IMR-90 (cell line): ENCODE measurements at regions of chr5 and their contacts with region 1.

Region 1: DNA sequence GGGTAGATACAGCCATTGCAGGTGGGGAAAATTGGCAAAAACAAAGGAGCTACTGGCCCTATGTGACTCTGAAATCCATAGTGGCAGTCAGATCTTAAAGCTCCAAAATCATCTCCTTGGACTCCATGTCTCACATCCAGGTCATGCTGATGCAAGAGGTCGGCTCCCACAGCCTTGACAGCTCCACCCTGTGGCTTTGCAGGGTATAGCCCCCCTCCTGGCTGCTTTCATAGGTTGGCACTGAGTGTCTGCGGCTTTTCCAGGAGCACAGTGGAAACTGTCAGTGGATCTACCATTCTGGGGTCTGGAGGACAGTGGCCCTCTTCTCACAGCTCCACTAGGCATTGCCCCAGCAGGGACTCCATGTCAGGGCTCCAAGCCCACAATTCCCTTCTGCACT is 1190.1 kb downstream of the CDH12 start:
- DNase-seq: no peak
- ATAC-seq: no peak
- H3K4me3 ChIP-seq: no peak overlapping the region
- H3K27ac ChIP-seq: no peak overlapping the region
- H3K4me1 ChIP-seq: no peaks in the 10 kb centered on the region
- H3K27me3 ChIP-seq: no peaks in the 10 kb centered on the region
- CTCF ChIP-seq: no peak
- POLR2A ChIP-seq: no peak
- RAD21 ChIP-seq: no peak

Region 2: DNA sequence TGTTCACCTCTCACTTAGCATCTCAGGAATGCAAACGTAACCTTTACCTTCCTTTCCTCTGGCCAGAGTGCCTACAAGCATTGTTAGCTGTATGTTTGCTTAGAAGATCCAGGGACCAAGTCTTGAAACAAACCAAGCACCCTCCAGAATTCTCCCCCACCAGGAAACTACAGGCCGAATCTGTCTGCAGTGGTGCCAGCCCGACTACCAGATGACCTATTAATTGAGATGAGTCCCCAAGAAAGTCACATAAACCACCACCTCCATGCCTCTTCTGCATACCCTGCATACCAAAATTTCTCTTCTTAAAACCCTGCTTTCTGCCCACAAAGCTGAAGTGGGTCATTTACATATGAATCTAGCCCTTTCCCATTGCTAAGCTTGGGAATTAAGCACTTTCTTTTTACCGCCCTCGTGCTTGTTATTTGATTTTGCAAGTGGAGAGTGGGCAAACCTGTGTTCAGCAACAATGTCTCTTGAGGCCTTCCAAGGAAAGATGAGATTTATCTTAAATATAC is 49.1 kb before region 1 on chr5:
- CTCF ChIA-PET with region 1: no interaction called
- POLR2A ChIA-PET with region 1: no interaction called
- dilution Hi-C with region 1: no loop called
- in situ Hi-C with region 1: no loop called
- intact Hi-C with region 1: loop called (anchors 5 kb)
- DNase-seq: no peak
- ATAC-seq: no peak
- H3K4me3 ChIP-seq: no peak overlapping the region
- H3K27ac ChIP-seq: no peak overlapping the region
- H3K4me1 ChIP-seq: no peaks in the 10 kb centered on the region
- H3K27me3 ChIP-seq: no peaks in the 10 kb centered on the region
- CTCF ChIP-seq: no peak
- POLR2A ChIP-seq: no peak
- RAD21 ChIP-seq: no peak

Region 3: DNA sequence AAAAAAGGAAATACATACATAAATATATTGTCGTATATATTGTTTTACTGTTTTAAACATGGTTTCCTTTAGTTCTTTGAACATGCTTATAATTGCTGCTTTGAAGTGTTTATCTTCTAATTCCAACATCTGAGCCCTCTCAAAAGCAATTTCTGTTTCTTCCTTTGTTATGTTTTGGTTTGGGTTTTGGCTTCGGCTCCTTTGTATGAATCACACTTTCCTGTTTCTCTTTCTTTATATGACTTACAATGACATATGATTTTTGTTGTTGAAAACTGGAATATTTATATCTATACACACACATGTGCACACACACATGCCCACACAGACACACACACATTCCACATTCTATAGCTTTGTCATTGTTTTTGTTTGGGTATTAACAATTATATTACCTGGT is 16.6 kb before region 1 on chr5:
- CTCF ChIA-PET with region 1: no interaction called
- POLR2A ChIA-PET with region 1: no interaction called
- dilution Hi-C with region 1: no loop called
- in situ Hi-C with region 1: no loop called
- intact Hi-C with region 1: no loop called
- DNase-seq: peak; percentile 40
- ATAC-seq: 0 out of 2 replicates have a peak, but pooled peaks have one; percentile 24
- H3K4me3 ChIP-seq: no peak overlapping the region
- H3K27ac ChIP-seq: peak overlapping the region; percentile 66; the same call in 1 of the 2 replicates
- H3K4me1 ChIP-seq: peaks cover 2% of the 10 kb centered on the region; the same call in 1 of the 2 replicates
- H3K27me3 ChIP-seq: no peaks in the 10 kb centered on the region
- CTCF ChIP-seq: no peak
- POLR2A ChIP-seq: no peak
- RAD21 ChIP-seq: no peak

Region 4: GRCh38 chr5:21774791-21775190 is 111.7 kb after region 1 on chr5:
- CTCF ChIA-PET with region 1: no interaction called
- POLR2A ChIA-PET with region 1: no interaction called
- dilution Hi-C with region 1: no loop called
- in situ Hi-C with region 1: no loop called
- intact Hi-C with region 1: no loop called
- DNase-seq: peak; percentile 78
- ATAC-seq: no peak
- H3K4me3 ChIP-seq: no peak overlapping the region
- H3K27ac ChIP-seq: no peak overlapping the region
- H3K4me1 ChIP-seq: no peaks in the 10 kb centered on the region
- H3K27me3 ChIP-seq: no peaks in the 10 kb centered on the region
- CTCF ChIP-seq: no peak
- POLR2A ChIP-seq: no peak
- RAD21 ChIP-seq: no peak

Region 5: DNA sequence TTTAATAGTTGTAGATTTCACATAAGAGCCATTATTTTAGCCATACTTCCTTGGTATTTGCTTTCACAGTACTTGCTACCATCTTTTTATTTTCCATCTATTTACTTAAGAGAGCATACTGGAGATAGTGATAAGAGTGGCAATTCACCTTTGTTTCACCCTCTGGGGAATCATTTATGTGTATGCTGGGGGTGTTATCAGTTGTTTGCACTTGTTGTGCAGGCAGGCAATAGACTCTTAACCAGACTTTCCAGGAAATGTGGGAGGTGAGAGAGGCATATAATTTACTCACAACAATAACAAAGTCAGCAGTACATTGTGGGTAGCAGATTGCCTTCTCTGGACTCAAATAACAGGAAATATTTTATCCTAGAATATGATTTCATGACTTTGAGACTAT is 171.8 kb after region 1 on chr5:
- CTCF ChIA-PET with region 1: no interaction called
- POLR2A ChIA-PET with region 1: no interaction called
- dilution Hi-C with region 1: no loop called
- in situ Hi-C with region 1: no loop called
- intact Hi-C with region 1: no loop called
- DNase-seq: no peak
- ATAC-seq: no peak
- H3K4me3 ChIP-seq: no peak overlapping the region
- H3K27ac ChIP-seq: no peak overlapping the region
- H3K4me1 ChIP-seq: no peaks in the 10 kb centered on the region
- H3K27me3 ChIP-seq: no peaks in the 10 kb centered on the region
- CTCF ChIP-seq: no peak
- POLR2A ChIP-seq: no peak
- RAD21 ChIP-seq: no peak